ENCODE measurements at regions of chr3 and their contacts with region 1.

Region 1: GRCh38 chr3:184289426-184289938 is 9.6 kb upstream of the PSMD2 start:
- DNase-seq: peak; percentile 43
- H3K4me3 Mint-ChIP-seq: no peak overlapping the region
- H3K27ac Mint-ChIP-seq: no peak overlapping the region
- H3K4me1 Mint-ChIP-seq: no peaks in the 10 kb centered on the region
- H3K27me3 Mint-ChIP-seq: peaks cover 12% of the 10 kb centered on the region

Region 2: DNA sequence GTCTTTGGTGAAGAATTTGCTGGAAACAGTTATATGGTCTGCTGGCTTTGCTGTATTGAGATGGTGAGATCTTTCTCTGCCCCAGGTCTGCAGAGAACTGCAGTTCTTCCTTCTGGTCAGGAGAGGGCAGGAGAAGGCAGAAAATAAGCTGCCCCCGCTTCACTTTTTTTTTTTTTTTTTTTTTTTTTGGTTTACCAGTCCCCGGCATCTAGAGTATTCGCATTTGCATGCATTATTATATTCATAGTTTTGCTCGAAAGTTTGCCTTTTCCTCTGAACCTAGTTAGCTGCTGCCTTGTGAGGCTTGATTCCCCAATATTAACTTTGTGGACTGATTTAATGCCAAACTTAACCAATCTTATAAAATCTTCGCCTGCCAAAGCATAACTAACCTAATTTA is 394.2 kb before region 1 on chr3:
- intact Hi-C with region 1: loop called (anchors 1 kb)
- DNase-seq: no peak
- H3K4me3 Mint-ChIP-seq: no peak overlapping the region
- H3K27ac Mint-ChIP-seq: no peak overlapping the region
- H3K4me1 Mint-ChIP-seq: peaks cover 3% of the 10 kb centered on the region
- H3K27me3 Mint-ChIP-seq: peaks cover 5% of the 10 kb centered on the region

Region 3: DNA sequence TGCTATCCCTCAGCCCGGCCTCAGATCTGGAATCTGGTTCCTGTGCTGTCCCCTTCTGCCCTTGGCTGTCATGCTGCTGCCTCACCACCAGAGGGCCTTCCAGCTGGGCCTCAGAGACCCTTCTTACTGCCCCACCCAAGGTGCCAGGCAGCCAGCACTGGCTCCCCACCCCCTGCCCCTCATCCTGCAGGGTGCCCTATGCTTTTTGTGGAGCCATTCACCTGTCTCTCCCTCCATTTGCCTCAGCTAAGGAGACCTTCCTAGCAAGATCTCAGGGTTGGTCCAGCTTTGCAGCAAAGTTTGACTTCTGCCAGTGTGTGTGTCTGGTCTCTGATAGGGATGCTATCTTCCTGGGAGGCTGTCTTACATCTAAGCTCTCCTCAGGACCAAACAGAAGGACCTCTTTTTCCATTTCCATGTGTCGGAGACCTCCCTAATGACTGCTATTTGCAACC is 62.0 kb before region 1 on chr3:
- intact Hi-C with region 1: loop called (anchors 2 kb)
- DNase-seq: peak; percentile 26
- H3K4me3 Mint-ChIP-seq: no peak overlapping the region
- H3K27ac Mint-ChIP-seq: no peak overlapping the region
- H3K4me1 Mint-ChIP-seq: peaks cover 6% of the 10 kb centered on the region
- H3K27me3 Mint-ChIP-seq: peaks cover 52% of the 10 kb centered on the region

Measured in activated T-helper 2 cell treated with anti-CD3 and anti-CD28 coated beads, Interferon-gamma antibody, Interleukin-2, Interleukin-4, amounts not matched to agents 10 μg/mL and 5 μg/mL and 100 μg/mL, durations not matched to agents 14 hours and 24 hours and 36 hours (primary cell).